Caco-2 (cell line): ENCODE measurements at regions of chr1 and their contacts with region 1.

Region 1: DNA sequence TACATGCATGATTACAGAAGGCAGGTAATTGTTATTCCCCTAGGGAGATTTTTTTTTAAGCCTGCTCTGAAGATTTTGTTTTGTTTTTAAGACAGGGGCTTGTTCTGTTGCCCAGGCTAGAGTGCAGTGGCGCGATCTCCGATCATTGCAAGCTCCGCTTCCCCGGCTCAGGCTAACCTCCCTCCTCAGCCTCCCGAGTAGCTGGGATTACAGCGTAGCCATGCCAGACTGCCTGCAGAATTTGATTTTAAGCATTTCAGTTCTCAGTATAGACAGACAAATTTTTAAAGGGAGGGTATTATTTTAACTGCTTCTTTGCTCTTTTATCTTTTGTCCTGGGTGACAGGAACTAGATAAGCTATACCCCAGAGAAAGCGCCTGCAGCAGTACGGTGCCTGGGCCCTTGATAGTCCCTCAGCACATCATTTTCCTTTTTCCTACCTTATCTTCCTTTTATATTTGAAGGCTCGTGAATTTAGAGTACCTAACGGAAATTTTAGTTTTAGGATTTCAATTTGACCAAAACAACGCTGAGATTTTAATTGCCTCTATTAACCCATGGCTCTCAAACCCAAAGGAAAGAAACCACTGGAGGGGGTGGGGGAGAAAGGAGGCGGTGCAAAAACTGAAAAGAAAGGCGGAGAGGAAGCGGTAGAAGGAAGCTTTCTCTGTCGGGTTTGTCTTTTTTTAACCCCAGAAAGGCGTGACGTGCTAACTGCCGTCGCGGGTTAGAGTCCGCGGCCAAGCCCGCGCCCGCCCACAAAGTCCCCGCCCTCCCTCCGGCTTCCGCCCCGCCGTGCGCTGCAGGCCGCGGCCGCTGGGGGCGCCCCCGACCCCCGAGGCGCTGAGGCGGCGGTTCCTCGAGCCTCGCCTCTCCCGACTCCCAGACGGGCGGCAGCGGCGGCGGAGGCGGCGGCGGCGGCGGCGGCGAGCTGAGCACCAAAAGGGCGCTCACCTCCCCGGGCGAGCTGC is at the start of gene EEIG2:
- DNase-seq: peak; percentile 73 to 89
- H3K4me3 ChIP-seq: peak within 1 kb of the TSS; percentile 48
- H3K4me3 Mint-ChIP-seq: peak within 1 kb of the TSS; percentile 85
- H3K27ac Mint-ChIP-seq: no peak within 1 kb of the TSS
- H3K4me1 ChIP-seq: peaks cover 4% of the 10 kb centered on the region; the same call in 1 of the 2 replicates
- H3K4me1 Mint-ChIP-seq: peaks cover 11% of the 10 kb centered on the region
- H3K27me3 ChIP-seq: no peaks in the 10 kb centered on the region
- H3K27me3 Mint-ChIP-seq: no peaks in the 10 kb centered on the region
- CTCF ChIP-seq: peak in 1 of 2 experiments; percentile 51
- total RNA-seq, gene EEIG2: 2.8 and 3.1 TPM in 2 replicates

Region 2: GRCh38 chr1:108327534-108328462 is 231.7 kb before region 1 on chr1:
- CTCF ChIA-PET with region 1: no interaction called
- POLR2A ChIA-PET with region 1: no interaction called
- intact Hi-C with region 1: loop called (anchors 1 kb)
- DNase-seq: peak in 1 of 2 experiments; percentile 1
- H3K4me3 ChIP-seq: no peak overlapping the region
- H3K4me3 Mint-ChIP-seq: no peak overlapping the region
- H3K27ac Mint-ChIP-seq: no peak overlapping the region
- H3K4me1 ChIP-seq: no peaks in the 10 kb centered on the region
- H3K4me1 Mint-ChIP-seq: peaks cover 6% of the 10 kb centered on the region
- H3K27me3 ChIP-seq: no peaks in the 10 kb centered on the region
- H3K27me3 Mint-ChIP-seq: no peaks in the 10 kb centered on the region
- CTCF ChIP-seq: no peak

Region 3: DNA sequence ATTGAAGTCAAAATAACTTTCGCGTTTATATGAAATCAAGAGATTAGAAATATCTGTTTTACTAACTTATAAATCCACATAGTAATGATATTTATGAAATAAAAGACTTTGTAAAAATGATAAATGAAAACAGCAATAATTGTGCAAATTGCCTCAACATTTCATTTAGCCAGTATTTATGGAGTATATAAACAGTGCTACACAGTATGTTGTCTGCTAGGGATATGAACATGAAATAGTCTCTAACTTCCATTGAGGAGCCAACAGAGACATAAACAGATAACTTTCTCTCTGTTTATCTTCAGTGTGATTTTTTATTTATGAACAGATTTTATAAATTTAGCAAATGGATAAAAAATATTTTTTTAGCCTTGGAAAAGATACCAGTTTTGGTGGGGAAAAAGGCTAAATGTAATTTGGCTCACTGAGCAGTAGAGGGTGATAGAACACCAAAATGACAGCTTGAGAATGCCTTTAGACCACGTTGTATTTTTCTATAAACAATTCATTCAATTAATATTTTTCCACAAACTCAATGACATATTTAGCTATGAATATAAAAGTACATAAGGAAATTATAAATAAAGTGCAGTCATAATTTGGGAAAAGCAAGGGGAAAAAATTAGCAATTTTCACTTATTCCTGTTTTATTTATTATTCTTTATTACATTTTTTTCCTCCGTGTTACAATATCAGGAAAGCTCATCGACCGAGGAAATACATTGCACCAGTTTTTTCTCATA is 47.1 kb before region 1 on chr1:
- CTCF ChIA-PET with region 1: interaction called, 9 read pairs
- POLR2A ChIA-PET with region 1: no interaction called
- intact Hi-C with region 1: loop called (anchors 1 kb)
- DNase-seq: no peak
- H3K4me3 ChIP-seq: no peak overlapping the region
- H3K4me3 Mint-ChIP-seq: no peak overlapping the region
- H3K27ac Mint-ChIP-seq: no peak overlapping the region
- H3K4me1 ChIP-seq: no peaks in the 10 kb centered on the region
- H3K4me1 Mint-ChIP-seq: no peaks in the 10 kb centered on the region
- H3K27me3 ChIP-seq: no peaks in the 10 kb centered on the region
- H3K27me3 Mint-ChIP-seq: peaks cover 5% of the 10 kb centered on the region
- CTCF ChIP-seq: peak; percentile 52 to 65

Region 4: GRCh38 chr1:108533351-108534083 is 26.0 kb before region 1 on chr1:
- CTCF ChIA-PET with region 1: interaction called, 12 read pairs
- POLR2A ChIA-PET with region 1: interaction called, 5 read pairs
- intact Hi-C with region 1: loop called (anchors 2 kb)
- DNase-seq: peak in 1 of 2 experiments; percentile 2
- H3K4me3 ChIP-seq: no peak overlapping the region
- H3K4me3 Mint-ChIP-seq: no peak overlapping the region
- H3K27ac Mint-ChIP-seq: no peak overlapping the region
- H3K4me1 ChIP-seq: peaks cover 3% of the 10 kb centered on the region; the same call in 1 of the 2 replicates
- H3K4me1 Mint-ChIP-seq: peaks cover 14% of the 10 kb centered on the region
- H3K27me3 ChIP-seq: no peaks in the 10 kb centered on the region
- H3K27me3 Mint-ChIP-seq: peaks cover 3% of the 10 kb centered on the region
- CTCF ChIP-seq: no peak

Region 5: DNA sequence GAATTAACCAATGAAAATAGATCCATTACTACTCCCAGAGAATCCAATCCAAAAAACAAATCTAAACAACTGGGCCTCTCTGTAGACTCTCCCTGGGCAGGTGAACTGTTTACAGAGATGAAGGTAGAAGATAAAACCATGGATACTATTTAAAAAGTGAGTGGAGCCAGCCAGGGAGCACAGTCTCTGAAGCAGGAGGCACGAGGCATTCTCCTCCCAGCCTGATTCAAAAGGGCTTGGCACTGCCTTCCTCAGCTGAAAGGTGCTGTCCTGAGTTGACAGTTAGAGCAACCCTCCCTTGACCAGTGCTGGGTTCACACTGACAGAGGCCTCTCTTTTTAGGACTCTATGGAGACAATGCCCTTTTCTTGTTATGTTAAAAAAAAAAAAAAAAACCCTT is 64.6 kb after region 1 on chr1:
- CTCF ChIA-PET with region 1: no interaction called
- POLR2A ChIA-PET with region 1: no interaction called
- intact Hi-C with region 1: no loop called
- DNase-seq: no peak
- H3K4me3 ChIP-seq: no peak overlapping the region
- H3K4me3 Mint-ChIP-seq: no peak overlapping the region
- H3K27ac Mint-ChIP-seq: no peak overlapping the region
- H3K4me1 ChIP-seq: no peaks in the 10 kb centered on the region
- H3K4me1 Mint-ChIP-seq: no peaks in the 10 kb centered on the region
- H3K27me3 ChIP-seq: no peaks in the 10 kb centered on the region
- H3K27me3 Mint-ChIP-seq: no peaks in the 10 kb centered on the region
- CTCF ChIP-seq: no peak